Esophagus muscularis mucosa (tissue), 4 donors: ENCODE measurements at regions of chr11 and their contacts with region 1.

Region 1: GRCh38 chr11:92211576-92212167 is 12.9 kb upstream of the FAT3 start:
- DNase-seq: no peak
- H3K4me3 ChIP-seq: no peak overlapping the region
- H3K27ac ChIP-seq: no peak overlapping the region
- H3K4me1 ChIP-seq: peaks cover 0 to 15% (median 3%) of the 10 kb centered on the region in 4 donors
- H3K27me3 ChIP-seq: no peaks in the 10 kb centered on the region
- CTCF ChIP-seq: peak; percentile 43 to 50 (median 48)
- EP300 ChIP-seq: no peak
- POLR2A ChIP-seq: no peak

Region 2: DNA sequence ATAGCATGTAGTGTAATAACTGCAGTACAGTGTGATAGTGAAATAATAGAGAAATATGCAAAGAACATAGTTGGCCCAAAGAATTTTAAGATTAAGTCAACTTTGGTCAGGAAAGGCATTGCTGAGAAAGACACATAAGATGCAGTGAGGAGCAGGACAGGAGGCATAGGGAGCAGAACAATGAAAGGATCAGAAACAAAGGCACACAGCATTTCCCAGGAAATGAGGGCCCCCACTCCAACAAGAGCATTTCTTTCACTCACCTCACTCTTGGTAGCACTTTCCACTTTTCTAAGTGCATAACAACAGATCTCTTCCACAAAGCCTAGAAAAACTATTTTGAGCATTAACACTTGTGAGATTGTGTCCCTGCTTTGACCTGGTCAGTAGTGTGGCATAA is 225.5 kb before region 1 on chr11:
- intact Hi-C with region 1: no loop called
- DNase-seq: no peak
- H3K4me3 ChIP-seq: no peak overlapping the region
- H3K27ac ChIP-seq: no peak overlapping the region
- H3K4me1 ChIP-seq: peaks cover 3 to 17% (median 14%) of the 10 kb centered on the region in 4 donors
- H3K27me3 ChIP-seq: no peaks in the 10 kb centered on the region
- CTCF ChIP-seq: no peak
- EP300 ChIP-seq: no peak
- POLR2A ChIP-seq: no peak

Region 3: GRCh38 chr11:92886243-92886905 is 674.7 kb after region 1 on chr11:
- intact Hi-C with region 1: loop called (anchors 10 kb)
- DNase-seq: no peak
- H3K4me3 ChIP-seq: no peak overlapping the region
- H3K27ac ChIP-seq: no peak overlapping the region
- H3K4me1 ChIP-seq: peaks cover 0 to 5% (median 0%) of the 10 kb centered on the region in 4 donors
- H3K27me3 ChIP-seq: no peaks in the 10 kb centered on the region
- CTCF ChIP-seq: peak; percentile 58 to 71 (median 63)
- EP300 ChIP-seq: no peak
- POLR2A ChIP-seq: no peak